Activated CD4-positive, alpha-beta memory T cell treated with anti-CD3 and anti-CD28 coated beads for 36 hours (primary cell): ENCODE measurements at regions of chrX and their contacts with region 1.

Region 1: DNA sequence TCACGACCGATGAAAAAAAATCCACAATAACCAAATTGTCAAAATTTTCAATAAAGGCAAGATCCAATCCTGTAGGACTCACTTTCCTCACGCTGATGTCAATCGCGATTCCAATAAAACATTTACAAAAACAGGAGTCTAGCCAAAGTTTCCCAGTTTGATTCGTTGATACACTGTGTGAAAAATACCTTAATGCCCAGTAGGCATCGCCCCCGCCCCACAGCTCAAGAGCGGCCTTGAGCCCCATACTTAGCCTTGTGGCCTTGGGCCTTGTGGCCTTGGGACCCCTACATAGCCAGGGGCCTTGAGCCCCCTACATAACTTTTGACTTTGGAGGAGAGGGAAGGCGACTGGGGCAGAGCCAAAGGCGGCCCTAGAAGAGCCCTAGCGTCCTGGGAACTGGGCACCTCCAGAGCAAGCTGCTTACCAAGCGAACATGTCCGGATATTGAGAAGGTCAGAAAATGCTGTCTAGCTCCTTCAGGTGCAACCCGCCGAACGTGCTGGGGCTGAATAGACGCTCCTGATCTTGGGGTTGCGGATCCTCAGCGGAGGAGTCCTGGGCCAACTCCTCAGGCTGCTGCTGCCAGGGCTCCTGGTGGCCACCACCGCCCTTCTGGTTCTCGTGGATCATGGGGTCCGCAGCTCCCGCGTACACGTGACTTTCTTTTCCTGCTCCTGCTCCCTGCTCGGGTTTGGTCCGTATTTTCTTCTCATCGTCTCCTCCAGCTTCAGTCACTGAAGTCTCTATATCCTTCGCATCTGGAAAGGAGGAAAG is 62.9 kb downstream of the RHOXF2B start:
- DNase-seq: no peak
- H3K4me3 Mint-ChIP-seq: peak overlapping the region; percentile 60
- H3K27ac Mint-ChIP-seq: no peak overlapping the region
- H3K4me1 Mint-ChIP-seq: peaks cover 13% of the 10 kb centered on the region
- H3K27me3 Mint-ChIP-seq: peaks cover 27% of the 10 kb centered on the region

Region 2: DNA sequence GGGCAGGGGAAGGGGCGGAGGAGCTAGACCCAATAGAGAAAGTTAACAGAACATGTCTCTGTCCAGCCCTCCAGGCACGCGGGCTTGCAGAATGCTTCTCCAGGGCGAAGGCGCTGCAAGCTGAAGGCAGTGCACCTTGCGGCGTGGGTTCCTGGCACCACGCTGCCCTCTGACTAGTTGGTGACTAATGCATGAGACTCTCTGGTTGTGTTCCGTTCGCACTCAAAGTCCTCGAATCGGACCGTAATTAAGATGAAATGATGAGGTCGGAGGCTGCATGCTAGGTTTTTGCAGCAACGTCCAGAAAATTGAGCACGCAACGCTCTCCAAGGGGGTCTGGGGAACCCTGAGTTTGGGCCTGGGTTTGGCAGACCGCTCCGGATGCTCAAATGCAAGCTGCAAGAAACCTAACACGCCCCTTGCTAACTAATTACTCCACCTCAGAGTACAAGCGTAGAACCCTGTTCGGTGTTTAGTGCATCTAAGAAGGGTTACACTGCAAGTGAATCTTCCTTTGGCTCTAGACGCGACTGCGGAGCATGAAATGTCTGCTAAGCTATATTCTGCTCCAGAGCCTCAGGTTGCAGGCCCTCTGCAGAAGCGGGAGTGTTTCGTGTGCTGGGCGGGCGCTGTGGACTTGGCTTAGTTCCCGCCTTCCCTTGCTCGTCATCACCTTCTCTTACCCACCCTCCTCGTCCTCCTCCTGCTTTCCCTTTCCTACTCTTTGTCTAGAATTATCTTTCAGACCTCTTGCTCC is 13.9 kb before region 1 on chrX:
- CTCF ChIA-PET with region 1: interaction called, 3 read pairs
- POLR2A ChIA-PET with region 1: no interaction called
- intact Hi-C with region 1: loop called (anchors 1 kb)
- DNase-seq: peak; percentile 43
- H3K4me3 Mint-ChIP-seq: no peak overlapping the region
- H3K27ac Mint-ChIP-seq: no peak overlapping the region
- H3K4me1 Mint-ChIP-seq: peaks cover 18% of the 10 kb centered on the region
- H3K27me3 Mint-ChIP-seq: peaks cover 44% of the 10 kb centered on the region

Region 3: GRCh38 chrX:120029354-120029753 is 14.8 kb after region 1 on chrX:
- CTCF ChIA-PET with region 1: no interaction called
- POLR2A ChIA-PET with region 1: no interaction called
- intact Hi-C with region 1: no loop called
- DNase-seq: no peak
- H3K4me3 Mint-ChIP-seq: no peak overlapping the region
- H3K27ac Mint-ChIP-seq: no peak overlapping the region
- H3K4me1 Mint-ChIP-seq: no peaks in the 10 kb centered on the region
- H3K27me3 Mint-ChIP-seq: peaks cover 3% of the 10 kb centered on the region